Dendritic cell treated with granulocyte-macrophage colony-stimulating factor and Interleukin-4, amounts not matched to agents 40 ng/mL and 50 ng/mL, for 4 days (primary cell): ENCODE measurements at regions of chr6 and their contacts with region 1.

Region 1: DNA sequence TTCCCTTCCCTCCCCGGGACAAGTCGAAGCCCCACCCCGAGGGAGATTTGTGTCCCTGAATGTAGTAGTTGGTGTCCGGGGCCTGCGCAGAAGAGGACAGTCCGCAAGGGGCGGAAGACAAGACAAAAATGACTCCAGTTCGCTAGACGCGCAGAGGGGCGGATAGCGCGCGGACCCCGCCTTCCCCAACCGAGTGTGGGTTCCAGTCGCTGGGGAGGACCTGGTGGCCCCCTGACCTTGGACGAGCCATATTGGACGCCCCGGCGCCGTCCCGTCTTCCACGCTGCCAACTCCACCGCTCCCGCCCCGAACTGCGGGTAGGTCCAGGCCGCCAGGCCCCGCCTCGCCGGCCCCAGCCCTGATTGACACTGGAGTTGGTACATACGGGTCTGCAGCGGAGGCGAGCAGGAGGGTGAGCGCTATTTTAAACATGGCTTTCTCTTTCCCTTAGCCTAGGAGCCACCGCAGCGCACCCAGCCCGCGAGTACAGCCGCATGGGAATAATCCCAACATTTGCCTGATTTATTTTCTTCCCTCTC is 802 bp downstream of the HMGN3 start:
- H3K4me3 Mint-ChIP-seq: peak overlapping the region; percentile 95
- H3K27ac Mint-ChIP-seq: peak overlapping the region; percentile 94
- H3K4me1 Mint-ChIP-seq: peaks cover 6% of the 10 kb centered on the region
- H3K27me3 Mint-ChIP-seq: no peaks in the 10 kb centered on the region

Region 2: DNA sequence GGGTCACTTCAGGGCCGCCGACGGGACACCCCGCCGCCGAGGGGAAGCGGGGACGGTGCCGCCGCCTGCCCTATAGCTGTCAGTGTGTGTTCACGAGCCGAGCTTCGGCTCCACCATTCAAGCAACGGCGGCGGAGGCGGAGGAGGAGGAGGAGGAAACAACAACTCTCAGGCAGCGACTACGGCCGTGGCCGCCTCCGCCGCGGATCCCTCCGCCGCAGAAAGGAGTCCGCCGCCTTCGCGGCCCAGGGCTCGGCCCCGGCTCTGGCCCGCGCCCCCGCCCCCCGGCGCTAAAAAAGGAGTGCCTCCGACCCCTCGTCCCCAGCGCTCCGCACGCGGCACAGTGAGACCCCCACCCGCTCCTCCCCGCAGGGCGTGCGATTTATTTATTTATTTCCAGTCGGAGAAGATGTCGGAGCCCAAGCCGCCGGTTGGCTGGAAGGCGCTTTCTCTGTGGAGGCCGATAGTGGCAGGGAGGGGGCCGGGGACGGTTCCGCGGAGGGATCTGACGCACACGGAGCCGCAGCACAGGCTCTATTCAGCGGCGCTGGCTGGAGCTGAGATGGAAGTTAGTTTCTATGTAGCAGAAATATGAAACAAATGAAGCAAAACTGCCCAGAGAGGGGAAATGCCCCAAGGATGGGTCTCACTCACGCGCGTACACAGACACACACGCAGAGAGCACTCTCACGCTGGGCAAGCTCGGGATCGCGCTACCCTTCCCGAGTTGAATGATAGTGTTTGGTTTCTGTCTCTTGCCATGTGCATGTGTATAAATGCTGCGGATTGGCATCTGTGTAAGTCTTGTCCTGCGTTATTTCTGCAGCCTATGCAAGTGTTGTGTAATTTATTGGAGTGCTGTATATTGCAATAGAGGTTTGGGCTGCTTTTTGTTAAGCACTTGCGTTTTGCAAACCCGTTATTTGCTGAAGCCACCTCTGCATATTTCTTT is 155.3 kb before region 1 on chr6 and contains the start of gene PHIP:
- intact Hi-C with region 1: loop called (anchors 1 kb)
- H3K4me3 Mint-ChIP-seq: peak within 1 kb of the TSS; percentile 92
- H3K27ac Mint-ChIP-seq: peak within 1 kb of the TSS; percentile 99
- H3K4me1 Mint-ChIP-seq: peaks cover 35% of the 10 kb centered on the region
- H3K27me3 Mint-ChIP-seq: no peaks in the 10 kb centered on the region

Region 3: DNA sequence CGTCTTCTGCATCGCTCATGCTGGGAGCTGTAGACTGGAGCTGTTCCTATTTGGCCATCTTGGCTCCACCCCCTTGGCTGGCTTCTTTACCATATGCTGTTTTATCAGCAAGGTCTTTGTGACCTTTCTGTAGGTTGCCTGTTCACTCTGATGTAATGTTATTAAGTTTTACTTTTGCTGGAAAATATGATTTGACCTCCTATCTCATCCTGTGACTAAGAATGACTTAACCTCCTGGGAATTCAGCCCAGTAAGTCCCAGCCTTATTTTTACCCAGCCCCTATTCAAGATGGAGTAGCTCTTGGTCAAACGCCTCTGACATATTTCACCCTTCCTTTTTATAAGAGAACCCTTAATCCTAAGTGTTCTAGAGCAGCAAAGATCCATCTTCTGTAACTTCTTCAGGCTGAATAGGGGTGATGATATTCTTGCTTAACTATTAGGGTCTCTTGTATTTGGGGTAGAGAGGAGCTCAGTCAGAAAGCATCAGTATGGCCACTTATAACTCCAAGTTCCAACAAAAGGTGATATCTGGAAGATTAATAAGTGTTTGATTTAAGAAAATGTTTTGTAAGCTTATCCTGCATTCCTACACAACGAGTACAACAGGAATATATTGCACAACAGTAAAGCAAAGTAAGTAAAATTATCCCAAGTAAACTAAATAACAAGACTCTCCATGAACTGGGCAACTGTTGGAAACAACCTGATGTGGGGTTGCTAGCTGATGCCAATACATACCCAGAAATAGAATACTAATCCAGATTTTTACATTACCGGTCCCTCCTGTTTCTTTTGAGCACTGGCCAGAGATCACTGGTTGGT is 23.9 kb after region 1 on chr6:
- intact Hi-C with region 1: no loop called
- H3K4me3 Mint-ChIP-seq: no peak overlapping the region
- H3K27ac Mint-ChIP-seq: no peak overlapping the region
- H3K4me1 Mint-ChIP-seq: no peaks in the 10 kb centered on the region
- H3K27me3 Mint-ChIP-seq: no peaks in the 10 kb centered on the region

Region 4: DNA sequence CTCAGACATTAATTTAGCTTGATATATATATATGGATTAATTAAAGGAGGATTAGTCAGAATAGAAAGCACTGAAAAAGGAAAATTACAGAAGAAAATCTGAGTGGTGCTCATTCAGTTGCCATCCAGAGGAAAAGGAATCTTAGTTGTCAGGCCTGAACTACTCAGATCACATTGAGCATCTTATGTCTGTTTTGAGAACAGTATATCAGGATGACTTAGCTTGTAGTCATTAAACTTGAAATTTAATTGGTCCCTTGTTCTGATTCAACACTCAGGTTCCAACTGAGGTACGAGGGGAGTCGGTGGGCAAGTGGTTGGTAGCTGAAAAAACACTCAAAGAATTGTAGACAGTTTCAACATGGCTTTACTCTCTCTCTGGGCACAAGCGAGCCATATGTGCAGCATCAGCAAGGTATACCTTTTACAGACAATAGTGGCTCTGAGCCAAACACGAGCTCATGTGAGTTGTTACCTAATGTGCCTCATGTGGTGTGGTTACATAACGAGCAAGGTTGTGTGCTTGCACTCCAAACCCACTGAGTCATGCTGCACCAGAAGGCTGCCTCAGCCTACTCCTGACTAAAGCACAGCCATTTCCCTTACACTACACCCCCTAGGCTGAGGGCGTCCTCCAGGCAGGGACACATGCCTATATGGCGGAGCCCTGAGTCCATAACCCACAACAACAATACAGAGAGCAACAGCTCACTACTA is 73.8 kb after region 1 on chr6:
- intact Hi-C with region 1: no loop called
- H3K4me3 Mint-ChIP-seq: no peak overlapping the region
- H3K27ac Mint-ChIP-seq: no peak overlapping the region
- H3K4me1 Mint-ChIP-seq: no peaks in the 10 kb centered on the region
- H3K27me3 Mint-ChIP-seq: no peaks in the 10 kb centered on the region

Region 5: GRCh38 chr6:79536954-79537747 is 303.5 kb after region 1 on chr6 and contains the start of gene LCA5:
- intact Hi-C with region 1: loop called (anchors 5 kb)
- H3K4me3 Mint-ChIP-seq: no peak within 1 kb of the TSS
- H3K27ac Mint-ChIP-seq: no peak within 1 kb of the TSS
- H3K4me1 Mint-ChIP-seq: no peaks in the 10 kb centered on the region
- H3K27me3 Mint-ChIP-seq: peaks cover 6% of the 10 kb centered on the region